ENCODE measurements at regions of chr20 and their contacts with region 1.

Region 1: GRCh38 chr20:45779011-45779915 is 12.4 kb downstream of the WFDC3 start:
- DNase-seq: peak; percentile 98
- H3K4me3 Mint-ChIP-seq: no peak overlapping the region
- H3K27ac Mint-ChIP-seq: peak overlapping the region; percentile 88
- H3K4me1 Mint-ChIP-seq: peaks cover 58% of the 10 kb centered on the region
- H3K27me3 Mint-ChIP-seq: peaks cover 3% of the 10 kb centered on the region
- CTCF ChIP-seq: no peak

Region 2: DNA sequence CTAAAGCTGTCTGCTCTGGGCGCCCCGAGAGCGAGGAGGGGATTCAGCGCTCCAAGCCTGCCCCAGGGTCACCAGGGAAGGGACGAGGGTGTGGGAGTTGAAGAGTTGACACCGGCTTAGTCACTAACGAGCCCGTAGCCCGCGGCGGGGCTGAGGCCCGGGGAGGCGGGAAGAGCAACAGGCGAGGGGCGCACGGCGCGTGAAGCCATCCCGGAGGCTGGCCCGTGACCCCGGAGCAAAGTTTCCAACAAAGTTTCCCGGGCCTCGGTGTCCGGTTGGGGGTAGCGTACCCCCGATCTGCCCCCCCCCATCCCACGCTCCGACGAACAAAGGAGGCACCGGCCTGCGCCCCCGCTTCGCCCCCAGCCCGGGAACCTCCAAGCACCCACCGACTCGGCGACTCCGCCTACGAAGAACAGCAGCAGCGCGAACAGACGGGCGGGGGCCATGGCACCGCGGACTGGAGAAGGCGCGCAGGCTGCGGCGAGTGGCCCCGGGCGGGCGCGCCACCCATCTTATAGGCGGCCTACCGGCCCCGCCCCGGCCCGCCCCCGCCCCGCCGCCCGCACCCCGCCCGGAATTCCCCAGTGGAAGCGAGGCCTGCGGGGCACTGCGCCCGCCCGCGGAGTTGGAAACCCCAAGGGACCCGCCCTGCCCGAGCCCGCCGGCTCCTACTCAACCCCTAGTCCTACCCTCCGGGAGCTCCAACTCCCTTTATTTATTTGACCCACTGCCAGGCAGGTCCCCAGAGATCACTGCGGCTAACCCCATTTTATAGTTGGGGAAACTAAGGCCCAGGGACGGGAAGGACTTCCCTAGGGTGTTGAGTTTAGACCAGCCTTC is 431.1 kb before region 1 on chr20 and contains the start of gene SDC4:
- CTCF ChIA-PET with region 1: interaction called, 5 read pairs
- POLR2A ChIA-PET with region 1: interaction called, 21 read pairs
- intact Hi-C with region 1: no loop called
- DNase-seq: peak; percentile 73
- H3K4me3 Mint-ChIP-seq: peak within 1 kb of the TSS; percentile 89
- H3K27ac Mint-ChIP-seq: peak within 1 kb of the TSS; percentile 93
- H3K4me1 Mint-ChIP-seq: peaks cover 20% of the 10 kb centered on the region
- H3K27me3 Mint-ChIP-seq: no peaks in the 10 kb centered on the region
- CTCF ChIP-seq: no peak
- total RNA-seq, gene SDC4: 180 and 209 TPM in 2 replicates

Region 3: GRCh38 chr20:45507011-45507820 is 272.0 kb before region 1 on chr20:
- CTCF ChIA-PET with region 1: no interaction called
- POLR2A ChIA-PET with region 1: interaction called, 12 read pairs
- intact Hi-C with region 1: no loop called
- DNase-seq: peak; percentile 53
- H3K4me3 Mint-ChIP-seq: no peak overlapping the region
- H3K27ac Mint-ChIP-seq: peak overlapping the region; percentile 69
- H3K4me1 Mint-ChIP-seq: peaks cover 35% of the 10 kb centered on the region
- H3K27me3 Mint-ChIP-seq: peaks cover under 1% of the 10 kb centered on the region
- CTCF ChIP-seq: no peak

Region 4: DNA sequence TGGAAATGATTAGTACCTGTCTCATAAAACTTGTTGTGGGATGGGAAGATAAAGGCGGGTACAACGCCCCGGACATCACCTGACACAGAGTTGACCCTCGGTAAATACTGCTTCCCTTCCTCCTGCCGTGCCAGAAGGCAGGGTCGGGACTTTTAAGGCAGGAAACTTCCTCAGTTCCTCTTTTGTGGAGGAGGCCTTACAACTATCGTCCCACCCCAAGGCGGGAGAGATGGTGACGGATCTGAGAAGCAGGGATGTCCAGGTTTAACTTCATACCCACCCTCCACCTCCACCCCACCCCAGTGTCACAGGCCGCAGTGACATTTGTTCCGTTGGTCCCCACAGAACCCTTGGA is 13.0 kb after region 1 on chr20:
- CTCF ChIA-PET with region 1: interaction called, 5 read pairs
- POLR2A ChIA-PET with region 1: interaction called, 91 read pairs
- intact Hi-C with region 1: no loop called
- DNase-seq: no peak
- H3K4me3 Mint-ChIP-seq: peak overlapping the region; percentile 88
- H3K27ac Mint-ChIP-seq: peak overlapping the region; percentile 99
- H3K4me1 Mint-ChIP-seq: peaks cover 10% of the 10 kb centered on the region
- H3K27me3 Mint-ChIP-seq: no peaks in the 10 kb centered on the region
- CTCF ChIP-seq: no peak

Region 5: DNA sequence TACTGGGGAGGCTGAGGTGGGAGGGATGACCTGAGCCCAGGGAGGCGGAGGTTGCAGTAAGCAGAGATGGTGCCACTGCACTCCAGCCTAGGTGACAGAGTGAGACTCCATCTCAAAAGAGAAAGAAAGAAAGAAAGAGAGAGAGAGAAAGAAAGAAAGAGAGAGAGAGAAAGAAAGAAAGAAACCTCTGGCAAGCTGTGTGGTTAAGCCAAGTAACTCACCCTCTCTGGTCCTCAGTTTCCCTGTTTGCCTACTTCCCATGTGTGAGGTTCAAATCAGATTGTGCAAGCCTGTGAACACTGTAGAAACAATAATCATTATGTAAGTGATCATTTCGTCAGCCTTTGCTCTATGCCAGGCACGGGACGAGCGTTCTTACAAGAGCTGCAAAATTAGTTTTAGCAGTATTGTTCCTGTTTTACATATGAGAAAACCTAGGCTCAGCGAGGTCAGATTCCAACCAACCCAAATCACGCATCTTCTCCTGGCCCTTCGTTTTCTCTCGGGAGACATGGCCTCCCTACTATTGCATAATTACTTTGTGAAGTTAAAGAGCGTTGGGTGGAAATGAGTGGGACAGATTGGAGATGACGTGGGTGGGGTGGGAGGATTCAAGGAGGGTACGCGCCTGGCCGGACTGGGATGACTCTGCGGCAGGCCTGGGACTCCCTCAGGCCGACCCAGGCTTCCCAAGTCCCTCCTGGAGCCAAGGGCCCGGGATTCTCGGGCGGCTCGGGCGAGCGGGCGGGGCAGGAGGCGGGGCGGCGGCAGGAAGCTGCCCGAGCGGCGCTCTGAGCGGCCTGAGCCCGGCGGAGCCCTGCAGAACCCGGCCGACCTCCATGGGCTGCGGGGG is 54.0 kb after region 1 on chr20 and contains the start of gene SNX21:
- CTCF ChIA-PET with region 1: no interaction called
- POLR2A ChIA-PET with region 1: interaction called, 16 read pairs
- intact Hi-C with region 1: no loop called
- DNase-seq: peak; percentile 83
- H3K4me3 Mint-ChIP-seq: peak within 1 kb of the TSS; percentile 80
- H3K27ac Mint-ChIP-seq: peak within 1 kb of the TSS; percentile 84
- H3K4me1 Mint-ChIP-seq: peaks cover 26% of the 10 kb centered on the region
- H3K27me3 Mint-ChIP-seq: no peaks in the 10 kb centered on the region
- CTCF ChIP-seq: no peak
- total RNA-seq, gene SNX21: 8.5 and 13.9 TPM in 2 replicates

Measured in MCF 10A (cell line).